ENCODE measurements at regions of chr6 and their contacts with region 1.

Region 1: DNA sequence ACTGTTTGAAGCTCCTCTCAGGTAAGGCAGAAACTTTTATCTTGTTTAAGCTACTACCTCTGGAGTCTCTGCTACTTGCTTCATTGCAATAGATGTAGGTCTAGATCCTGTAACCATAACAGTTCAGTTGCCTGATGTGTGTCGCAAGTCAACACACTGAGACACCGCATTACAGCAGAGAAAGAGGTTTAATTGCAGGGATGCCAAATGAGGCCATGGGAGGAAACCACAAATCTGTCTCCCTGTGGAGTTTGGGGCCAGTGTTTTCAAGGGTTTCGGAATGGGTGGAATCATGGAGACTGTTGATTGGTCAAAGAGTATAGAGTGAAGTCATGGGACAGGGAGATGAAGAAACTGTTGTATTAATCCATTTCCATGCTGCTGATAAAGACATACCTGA is 57.1 kb upstream of the RBM24 start:
- DNase-seq: no peak
- ATAC-seq: no peak

Region 2: DNA sequence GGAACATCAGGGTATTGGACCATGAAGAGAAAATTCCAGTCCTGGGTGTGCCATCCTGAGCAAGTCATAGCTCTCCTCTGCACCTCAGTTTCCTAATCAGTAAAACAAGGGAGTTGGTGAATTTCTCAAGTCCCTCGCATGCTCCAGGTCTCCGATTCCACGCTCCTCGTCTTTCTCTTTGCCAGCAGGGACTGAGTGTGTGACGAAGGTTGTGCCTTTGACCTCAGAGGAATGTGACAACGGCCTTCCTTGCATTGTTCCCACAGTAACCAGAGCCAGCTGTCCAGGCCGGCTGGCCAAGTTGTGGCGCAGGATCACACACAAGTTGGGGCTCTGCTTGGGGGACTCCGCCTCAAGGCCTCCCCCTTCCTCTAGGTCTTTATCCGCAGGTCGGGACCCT is 680.0 kb before region 1 on chr6:
- intact Hi-C with region 1: no loop called
- DNase-seq: peak; percentile 60
- ATAC-seq: peak; percentile 80 to 82

Region 3: GRCh38 chr6:17258749-17259148 is 34.7 kb after region 1 on chr6:
- intact Hi-C with region 1: loop called in 1 of 2 experiments (anchors 5 kb)
- DNase-seq: no peak
- ATAC-seq: no peak

Measured in left cardiac atrium (tissue), 4 donors.